ENCODE measurements at regions of chr5 and their contacts with region 1.

Region 1: GRCh38 chr5:68261569-68262065 is 46.1 kb downstream of the PIK3R1 start:
- DNase-seq: no peak
- H3K4me3 Mint-ChIP-seq: no peak overlapping the region
- H3K27ac Mint-ChIP-seq: peak overlapping the region; percentile 21
- H3K4me1 Mint-ChIP-seq: peaks cover 84% of the 10 kb centered on the region
- H3K27me3 Mint-ChIP-seq: no peaks in the 10 kb centered on the region

Region 2: DNA sequence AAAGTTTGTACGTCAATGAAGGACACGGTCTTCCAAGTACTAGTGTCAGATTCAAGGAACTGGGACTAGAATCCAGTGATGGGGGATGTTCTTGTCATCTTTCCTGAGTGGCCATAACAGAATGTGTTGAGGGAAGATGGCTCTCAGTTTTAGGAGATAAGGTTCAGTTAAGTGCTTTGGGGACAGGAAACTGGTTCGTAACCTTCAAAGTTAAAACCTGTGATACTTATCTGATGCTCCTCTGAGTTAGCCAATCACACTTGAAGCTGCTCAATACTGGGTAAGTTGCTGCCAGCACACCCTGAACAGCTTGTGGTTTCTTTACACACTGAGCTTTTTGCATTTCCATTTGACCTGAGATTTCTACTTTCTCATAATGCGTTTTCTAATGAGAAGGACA is 18.4 kb after region 1 on chr5:
- CTCF ChIA-PET with region 1: interaction called, 4 read pairs
- intact Hi-C with region 1: loop called (anchors 2 kb)
- DNase-seq: peak; percentile 55
- H3K4me3 Mint-ChIP-seq: peak overlapping the region; percentile 64
- H3K27ac Mint-ChIP-seq: peak overlapping the region; percentile 97
- H3K4me1 Mint-ChIP-seq: peaks cover 77% of the 10 kb centered on the region
- H3K27me3 Mint-ChIP-seq: no peaks in the 10 kb centered on the region